Activated T-helper 1 cell treated with anti-CD3 and anti-CD28 coated beads, Interleukin-12 subunit alpha, Interleukin-12 subunit beta, Interleukin-2, Interleukin-4 antibody, amounts not matched to agents 30 ng/mL and 10 ng/mL and 1 ng/mL, durations not matched to agents 14 hours and 24 hours and 36 hours (primary cell): ENCODE measurements at regions of chr12 and their contacts with region 1.

Region 1: GRCh38 chr12:56688129-56688845 is at the start of gene PTGES3:
- DNase-seq: peak; percentile 98
- H3K4me3 Mint-ChIP-seq: peak within 1 kb of the TSS; percentile 100
- H3K27ac Mint-ChIP-seq: peak within 1 kb of the TSS; percentile 100
- H3K4me1 Mint-ChIP-seq: peaks cover 23% of the 10 kb centered on the region
- H3K27me3 Mint-ChIP-seq: no peaks in the 10 kb centered on the region
- total RNA-seq, gene PTGES3: 301 and 302 TPM in 2 replicates

Region 2: DNA sequence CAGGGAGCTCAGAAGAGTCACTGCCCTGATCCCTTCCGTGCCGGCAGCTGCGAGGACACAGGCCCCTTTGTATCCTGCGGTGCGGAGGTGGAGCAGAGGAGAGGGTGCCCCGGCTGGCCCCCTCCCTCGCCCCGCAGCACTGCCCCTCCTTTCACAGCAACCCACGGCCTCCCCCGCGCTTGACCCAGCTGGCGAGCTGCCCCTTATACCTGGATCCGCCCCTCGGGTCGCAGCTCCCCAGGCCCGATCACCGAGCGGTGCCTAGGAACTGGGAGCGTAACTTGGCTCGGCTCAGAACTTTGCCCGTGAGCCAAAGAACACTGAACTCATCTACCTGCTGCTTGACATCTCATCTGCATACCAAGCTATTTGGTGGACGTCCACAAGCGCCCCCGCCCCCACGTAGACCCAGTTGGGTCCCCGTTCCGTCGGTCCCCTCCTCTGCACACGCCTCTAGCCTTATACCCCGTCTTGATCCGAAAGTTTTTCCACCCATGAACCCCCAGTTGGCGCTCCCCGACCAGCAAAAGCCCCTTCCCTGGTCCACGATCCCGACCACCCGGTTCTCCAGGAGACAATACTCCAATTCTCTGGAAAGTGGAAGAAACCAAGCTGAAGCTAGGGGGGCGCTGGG is 858.2 kb before region 1 on chr12:
- intact Hi-C with region 1: loop called (anchors 5 kb)
- DNase-seq: peak; percentile 22
- H3K4me3 Mint-ChIP-seq: peak overlapping the region; percentile 98
- H3K27ac Mint-ChIP-seq: peak overlapping the region; percentile 92
- H3K4me1 Mint-ChIP-seq: peaks cover 37% of the 10 kb centered on the region
- H3K27me3 Mint-ChIP-seq: no peaks in the 10 kb centered on the region

Region 3: DNA sequence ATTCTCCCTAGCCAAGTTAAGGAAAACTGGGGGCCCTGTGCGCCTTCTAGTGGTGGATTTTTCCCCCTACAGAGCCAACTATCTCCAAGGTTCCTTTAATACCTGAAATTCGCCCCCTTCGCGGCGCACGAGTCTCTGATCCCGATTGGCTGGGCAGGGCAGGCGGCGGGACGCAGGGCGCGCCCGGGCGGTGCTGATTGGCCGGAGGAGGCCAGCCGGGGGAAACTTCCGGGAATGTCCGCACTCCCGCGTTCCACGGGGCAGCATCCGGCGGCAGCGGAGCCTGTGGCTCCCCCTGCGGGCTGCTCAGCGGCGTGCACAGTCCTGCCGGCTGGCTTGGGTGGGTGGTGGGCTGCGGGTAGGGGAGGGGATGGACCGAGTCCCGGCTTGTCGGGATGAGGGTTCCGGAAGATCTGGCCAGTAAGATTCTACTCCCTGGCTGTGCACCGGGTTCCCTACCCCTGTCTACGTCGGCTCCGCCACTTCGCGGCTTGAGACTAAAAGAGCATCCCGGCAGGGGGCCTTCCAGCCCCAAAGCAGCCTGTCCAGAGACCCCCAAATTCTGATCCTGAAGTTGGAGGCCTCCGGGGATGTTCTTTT is 464.1 kb before region 1 on chr12 and contains the start of gene NABP2:
- intact Hi-C with region 1: loop called (anchors 1 kb)
- DNase-seq: peak; percentile 94
- H3K4me3 Mint-ChIP-seq: peak within 1 kb of the TSS; percentile 99
- H3K27ac Mint-ChIP-seq: peak within 1 kb of the TSS; percentile 81
- H3K4me1 Mint-ChIP-seq: peaks cover 51% of the 10 kb centered on the region
- H3K27me3 Mint-ChIP-seq: no peaks in the 10 kb centered on the region
- total RNA-seq, gene NABP2: 97.5 and 102 TPM in 2 replicates

Region 4: GRCh38 chr12:56630160-56630632 is 58.1 kb before region 1 on chr12 and contains the start of gene BAZ2A:
- intact Hi-C with region 1: loop called (anchors 2 kb)
- DNase-seq: peak; percentile 85
- H3K4me3 Mint-ChIP-seq: peak within 1 kb of the TSS; percentile 97
- H3K27ac Mint-ChIP-seq: peak within 1 kb of the TSS; percentile 89
- H3K4me1 Mint-ChIP-seq: peaks cover 72% of the 10 kb centered on the region
- H3K27me3 Mint-ChIP-seq: no peaks in the 10 kb centered on the region
- total RNA-seq, gene BAZ2A: 119 and 126 TPM in 2 replicates

Region 5: GRCh38 chr12:56677680-56678079 is 10.6 kb before region 1 on chr12:
- intact Hi-C with region 1: loop called (anchors 1 kb)
- DNase-seq: no peak
- H3K4me3 Mint-ChIP-seq: no peak overlapping the region
- H3K27ac Mint-ChIP-seq: peak overlapping the region; percentile 55
- H3K4me1 Mint-ChIP-seq: peaks cover 40% of the 10 kb centered on the region
- H3K27me3 Mint-ChIP-seq: no peaks in the 10 kb centered on the region

Region 6: GRCh38 chr12:56900583-56900982 is 212.3 kb after region 1 on chr12:
- intact Hi-C with region 1: no loop called
- DNase-seq: no peak
- H3K4me3 Mint-ChIP-seq: no peak overlapping the region
- H3K27ac Mint-ChIP-seq: no peak overlapping the region
- H3K4me1 Mint-ChIP-seq: no peaks in the 10 kb centered on the region
- H3K27me3 Mint-ChIP-seq: peaks cover 3% of the 10 kb centered on the region

Region 7: GRCh38 chr12:57111031-57111734 is 422.9 kb after region 1 on chr12 and contains the start of gene STAT6:
- intact Hi-C with region 1: loop called (anchors 1 kb)
- DNase-seq: peak; percentile 84
- H3K4me3 Mint-ChIP-seq: peak within 1 kb of the TSS; percentile 99
- H3K27ac Mint-ChIP-seq: peak within 1 kb of the TSS; percentile 98
- H3K4me1 Mint-ChIP-seq: peaks cover 51% of the 10 kb centered on the region
- H3K27me3 Mint-ChIP-seq: no peaks in the 10 kb centered on the region
- total RNA-seq, gene STAT6: 306 and 318 TPM in 2 replicates